ENCODE measurements at regions of chr9 and their contacts with region 1.

Region 1: DNA sequence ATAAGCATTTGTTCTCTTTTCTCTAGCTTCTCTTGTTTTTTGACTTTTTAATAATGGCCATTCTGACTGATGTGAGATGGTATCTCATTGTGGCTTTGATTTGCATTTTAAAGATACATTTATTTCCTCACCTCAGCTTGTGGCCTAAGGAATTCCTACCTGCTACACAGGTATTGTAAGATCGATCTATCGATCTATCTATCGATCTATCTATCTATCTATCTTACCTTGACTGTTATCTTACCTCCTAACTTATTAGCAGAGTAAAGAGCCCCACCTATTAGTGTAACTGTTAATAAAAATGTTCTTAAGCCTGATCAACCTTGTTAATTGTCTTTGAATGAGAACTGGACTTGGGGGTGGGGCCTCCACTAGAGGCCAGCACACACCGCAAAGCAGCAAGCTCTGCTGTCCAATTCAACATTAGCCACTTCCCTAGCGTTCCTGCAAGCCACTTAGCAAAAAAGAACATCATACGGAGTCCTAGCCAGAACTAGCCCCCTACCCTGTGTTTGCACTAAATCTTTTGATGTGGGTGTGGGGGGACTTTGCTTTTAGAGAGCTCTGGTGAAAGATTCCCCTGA is 515.7 kb downstream of the KDM4C start:
- DNase-seq: peak; percentile 57
- ATAC-seq: peak; percentile 62

Region 2: GRCh38 chr9:6764523-6764922 is 509.0 kb before region 1 on chr9:
- intact Hi-C with region 1: no loop called
- DNase-seq: no peak
- ATAC-seq: no peak

Region 3: GRCh38 chr9:7402334-7403027 is 129.0 kb after region 1 on chr9:
- intact Hi-C with region 1: no loop called
- DNase-seq: no peak
- ATAC-seq: peak; percentile 15

Region 4: DNA sequence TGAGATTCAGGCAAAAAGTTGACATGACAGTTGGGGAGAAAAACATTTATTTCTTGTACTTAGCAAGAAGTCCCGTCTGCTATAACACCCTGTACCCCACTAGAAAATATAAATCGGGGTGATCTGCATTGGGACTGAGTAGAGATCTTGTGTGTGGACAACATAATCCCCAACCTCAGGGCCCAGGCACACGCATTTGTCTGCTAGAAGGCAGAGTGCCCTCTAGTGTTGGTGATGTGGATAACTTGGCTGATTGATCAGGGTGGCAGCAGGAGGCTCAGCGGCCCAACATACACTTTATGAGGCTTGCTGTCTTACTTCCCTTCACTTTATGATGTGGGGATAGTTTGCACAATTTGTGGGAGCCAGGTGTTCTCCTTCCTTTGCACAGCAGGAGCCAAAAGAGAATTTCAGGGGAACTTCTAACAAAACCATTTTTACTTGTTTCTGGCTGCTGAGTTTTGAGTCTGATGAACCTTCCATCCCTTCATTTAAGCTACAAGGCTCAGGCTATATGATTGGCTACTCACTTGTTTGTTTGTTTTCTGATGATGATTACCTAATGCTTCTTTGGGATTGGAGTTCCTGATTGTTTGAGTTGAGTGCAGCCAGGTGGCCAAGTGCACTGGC is 262.9 kb after region 1 on chr9:
- intact Hi-C with region 1: loop called (anchors 10 kb)
- DNase-seq: peak; percentile 41
- ATAC-seq: peak; percentile 75

Measured in left ventricle myocardium superior (tissue), 1 donor.